Dendritic cell treated with granulocyte-macrophage colony-stimulating factor and Interleukin-4, amounts not matched to agents 40 ng/mL and 50 ng/mL, for 4 days (primary cell): ENCODE measurements at regions of chr6 and their contacts with region 1.

Region 1: DNA sequence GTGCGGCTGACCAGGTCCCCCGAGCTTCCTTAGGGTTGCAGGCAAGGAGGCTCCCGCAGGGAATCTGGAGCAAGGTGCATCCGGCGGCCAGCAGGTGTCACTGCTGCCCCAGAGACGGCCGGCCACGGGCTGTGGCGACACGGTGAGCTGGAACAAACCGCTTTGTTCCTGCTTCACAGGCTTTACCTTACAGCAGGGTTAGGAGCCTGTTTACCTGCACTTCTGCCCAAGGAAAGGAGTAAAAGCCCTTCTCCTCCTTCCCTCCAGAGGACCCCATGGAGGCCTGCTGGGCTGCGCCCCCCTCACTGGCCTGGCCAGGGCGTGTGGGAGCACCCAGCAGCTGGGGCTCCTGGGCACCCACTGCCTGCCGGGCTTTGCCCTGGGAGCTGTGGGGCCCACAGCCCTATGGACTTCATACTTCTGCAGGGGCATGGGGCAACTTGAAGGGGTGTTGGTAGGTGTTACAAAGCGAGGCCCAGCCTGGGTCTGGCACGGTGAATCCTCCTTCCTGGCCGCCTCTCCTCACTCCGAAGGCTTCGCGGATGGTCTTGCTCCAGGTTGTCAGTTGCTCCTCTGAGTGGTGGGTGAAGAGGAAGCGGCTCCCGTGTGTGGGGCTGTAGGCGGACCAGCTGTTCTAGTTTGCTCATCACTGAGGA is 88.4 kb downstream of the CDC5L start:
- H3K4me3 Mint-ChIP-seq: no peak overlapping the region
- H3K27ac Mint-ChIP-seq: no peak overlapping the region
- H3K4me1 Mint-ChIP-seq: peaks cover 26% of the 10 kb centered on the region
- H3K27me3 Mint-ChIP-seq: peaks cover 18% of the 10 kb centered on the region

Region 2: DNA sequence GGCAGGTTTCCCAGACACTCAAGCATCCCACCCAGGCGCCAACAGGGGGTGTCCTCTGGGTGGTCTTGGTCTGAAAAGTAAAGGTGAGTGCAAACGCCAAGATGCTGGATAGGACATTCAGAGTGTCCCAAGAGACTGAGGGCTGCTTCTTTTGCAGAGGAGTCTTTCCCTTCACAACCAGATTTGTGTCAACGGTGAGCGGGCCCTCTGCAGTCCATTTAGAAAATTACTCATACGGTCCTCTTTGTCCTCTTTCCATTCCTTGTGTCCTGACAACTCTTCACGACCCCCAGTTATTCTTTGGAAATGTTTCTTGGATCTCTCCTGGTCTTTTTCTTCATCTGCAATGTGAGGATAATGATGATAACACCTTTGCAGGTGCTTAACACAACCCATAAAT is 169.4 kb after region 1 on chr6:
- intact Hi-C with region 1: loop called (anchors 5 kb)
- H3K4me3 Mint-ChIP-seq: no peak overlapping the region
- H3K27ac Mint-ChIP-seq: no peak overlapping the region
- H3K4me1 Mint-ChIP-seq: peaks cover 18% of the 10 kb centered on the region
- H3K27me3 Mint-ChIP-seq: peaks cover 4% of the 10 kb centered on the region

Region 3: GRCh38 chr6:45075246-45075645 is 599.3 kb after region 1 on chr6:
- intact Hi-C with region 1: no loop called
- H3K4me3 Mint-ChIP-seq: no peak overlapping the region
- H3K27ac Mint-ChIP-seq: no peak overlapping the region
- H3K4me1 Mint-ChIP-seq: no peaks in the 10 kb centered on the region
- H3K27me3 Mint-ChIP-seq: no peaks in the 10 kb centered on the region